WTC11 (cell line): ENCODE measurements at regions of chr17 and their contacts with region 1.

Region 1: GRCh38 chr17:45051060-45051719 is at the start of gene DCAKD:
- DNase-seq: peak; percentile 91
- ATAC-seq: peak; percentile 99
- H3K4me3 Mint-ChIP-seq: peak within 1 kb of the TSS; percentile 92
- H3K27ac Mint-ChIP-seq: peak within 1 kb of the TSS; percentile 97
- H3K4me1 Mint-ChIP-seq: peaks cover 25% of the 10 kb centered on the region
- H3K27me3 Mint-ChIP-seq: no peaks in the 10 kb centered on the region
- CTCF ChIP-seq: no peak
- total RNA-seq, gene DCAKD: 57.7 to 59.2 TPM (median 58.7 TPM) in 3 replicates

Region 2: DNA sequence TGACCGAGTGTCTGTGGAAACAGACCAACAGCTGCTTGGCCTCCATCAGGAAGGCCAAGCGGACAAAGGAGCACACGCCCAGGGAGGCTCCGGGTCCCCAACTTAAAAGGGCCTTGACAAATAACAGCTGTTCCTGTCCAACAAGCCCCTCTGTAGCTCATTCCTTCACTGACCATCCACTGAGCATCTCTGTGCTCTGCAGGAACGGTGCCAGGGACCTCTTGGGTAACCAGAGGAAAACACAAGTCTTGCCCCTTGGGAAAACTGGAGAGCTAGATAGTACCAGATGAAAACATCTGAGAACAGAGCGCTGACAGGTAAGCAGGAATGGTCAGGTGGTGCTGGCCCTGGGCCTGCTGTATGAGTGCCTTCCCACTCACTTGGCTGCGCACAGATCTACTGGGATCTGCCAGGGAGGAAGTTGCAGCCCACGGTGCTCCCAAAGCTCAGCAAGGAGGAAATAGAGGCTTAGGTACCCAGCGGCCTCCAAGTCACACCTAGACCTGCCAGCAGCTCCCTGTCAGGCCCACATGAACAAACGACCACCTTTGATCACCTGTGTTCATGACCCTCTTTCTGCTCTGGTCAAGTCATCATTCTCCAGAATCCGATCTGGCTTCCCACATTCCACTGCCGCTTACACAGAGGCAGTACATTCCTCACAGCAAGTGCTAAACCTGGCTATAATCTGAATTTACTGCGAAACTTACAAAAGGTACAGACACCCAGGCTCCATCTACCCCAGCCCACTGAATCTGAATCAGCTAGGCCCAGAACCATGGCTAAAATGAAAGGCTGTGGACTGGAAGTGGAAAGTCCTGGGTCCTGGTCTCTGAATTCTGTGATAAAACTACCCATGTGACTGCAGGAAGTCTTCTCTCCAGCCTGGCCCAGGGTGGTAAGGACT is 12.2 kb before region 1 on chr17:
- CTCF ChIA-PET with region 1: interaction called, 11 read pairs
- POLR2A ChIA-PET with region 1: no interaction called
- DNase-seq: no peak
- ATAC-seq: no peak
- H3K4me3 Mint-ChIP-seq: no peak overlapping the region
- H3K27ac Mint-ChIP-seq: peak overlapping the region; percentile 88
- H3K4me1 Mint-ChIP-seq: peaks cover 34% of the 10 kb centered on the region
- H3K27me3 Mint-ChIP-seq: no peaks in the 10 kb centered on the region
- CTCF ChIP-seq: no peak

Region 3: DNA sequence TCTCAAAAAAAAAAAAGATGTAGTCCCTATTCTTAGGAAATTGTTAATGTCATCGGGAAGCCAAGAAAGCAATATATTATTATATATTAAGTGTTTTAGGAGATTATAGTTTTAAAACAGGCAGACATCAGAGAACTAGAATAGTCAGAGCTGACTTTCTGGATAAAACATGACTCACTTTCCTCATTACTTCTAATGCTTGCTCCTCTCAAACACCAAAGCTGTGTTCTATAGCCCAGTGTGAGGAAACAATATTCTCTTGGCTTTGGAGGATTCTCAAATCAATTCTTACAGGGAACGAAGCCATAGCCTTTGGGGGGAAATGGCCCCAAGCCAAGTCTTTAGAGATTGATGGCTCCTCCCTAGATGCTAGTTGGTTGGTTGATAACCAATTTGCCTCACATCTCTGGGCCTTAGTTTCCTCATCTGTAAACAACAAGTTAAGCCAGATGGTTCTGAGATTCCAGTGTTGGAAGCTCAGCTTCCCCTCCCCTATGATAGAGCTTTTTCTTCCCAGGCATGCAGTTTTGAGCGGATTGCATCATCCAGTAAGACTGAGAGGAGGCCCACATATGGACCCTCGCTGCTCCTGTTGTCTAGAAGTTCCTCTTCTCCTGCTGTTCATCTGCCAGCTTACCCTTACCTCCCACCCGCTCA is 22.4 kb after region 1 on chr17:
- CTCF ChIA-PET with region 1: no interaction called
- POLR2A ChIA-PET with region 1: no interaction called
- DNase-seq: no peak
- ATAC-seq: no peak
- H3K4me3 Mint-ChIP-seq: no peak overlapping the region
- H3K27ac Mint-ChIP-seq: peak overlapping the region; percentile 66
- H3K4me1 Mint-ChIP-seq: no peaks in the 10 kb centered on the region
- H3K27me3 Mint-ChIP-seq: no peaks in the 10 kb centered on the region
- CTCF ChIP-seq: no peak